ENCODE measurements at regions of chr11 and their contacts with region 1.

Region 1: GRCh38 chr11:73393479-73394380 is 17.5 kb downstream of the RELT start:
- DNase-seq: peak; percentile 45 to 81 (median 71)
- ATAC-seq: peak; percentile 79
- H3K4me3 ChIP-seq: no peak overlapping the region
- H3K4me3 Mint-ChIP-seq: no peak overlapping the region
- H3K27ac ChIP-seq: no peak overlapping the region
- H3K27ac Mint-ChIP-seq: no peak overlapping the region
- H3K4me1 ChIP-seq: no peaks in the 10 kb centered on the region
- H3K4me1 Mint-ChIP-seq: peaks cover 3% of the 10 kb centered on the region
- H3K27me3 ChIP-seq: no peaks in the 10 kb centered on the region
- H3K27me3 Mint-ChIP-seq: no peaks in the 10 kb centered on the region
- CTCF ChIP-seq: peak; percentile 62

Region 2: DNA sequence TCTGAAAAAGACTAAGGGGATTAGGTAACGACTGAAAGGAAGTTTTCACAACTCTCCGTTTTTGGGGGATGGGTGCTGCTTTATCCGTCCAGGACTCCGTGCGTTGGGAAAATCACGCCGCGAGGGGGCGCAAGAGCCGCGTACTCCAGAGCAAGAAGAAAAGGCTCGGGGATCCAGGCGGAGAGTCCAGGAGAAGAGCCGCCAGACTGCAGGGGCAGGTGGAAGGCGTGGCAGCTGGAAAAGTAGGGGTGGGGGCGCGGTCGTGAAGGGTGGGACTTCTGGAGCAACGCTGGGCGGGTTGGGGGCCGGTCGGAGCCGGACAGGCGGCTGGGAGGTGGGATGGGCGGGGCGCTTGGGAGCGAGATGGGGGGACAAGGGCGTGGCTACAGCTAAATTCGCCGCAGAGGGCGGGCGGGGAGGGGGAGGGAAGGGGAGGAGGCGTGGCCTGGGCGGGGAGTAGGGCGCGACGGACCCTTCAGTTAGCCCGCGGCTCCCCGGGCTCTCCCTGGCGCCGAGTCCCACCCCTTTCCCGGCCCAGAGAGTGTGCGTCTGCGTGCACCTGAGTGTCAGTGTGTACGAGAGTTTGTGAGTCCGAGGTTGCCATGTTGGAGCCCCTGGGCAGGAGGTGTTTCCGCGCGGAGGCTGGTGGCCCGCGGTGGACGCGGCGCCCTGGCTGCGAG is 86.3 kb before region 1 on chr11:
- CTCF ChIA-PET with region 1: interaction called, 5 read pairs
- POLR2A ChIA-PET with region 1: no interaction called
- intact Hi-C with region 1: loop called (anchors 1 kb)
- DNase-seq: peak; percentile 77 to 94 (median 89)
- ATAC-seq: peak; percentile 71
- H3K4me3 ChIP-seq: peak overlapping the region; percentile 62 to 77
- H3K4me3 Mint-ChIP-seq: peak overlapping the region; percentile 86
- H3K27ac ChIP-seq: no peak overlapping the region
- H3K27ac Mint-ChIP-seq: no peak overlapping the region
- H3K4me1 ChIP-seq: peaks cover 9% of the 10 kb centered on the region
- H3K4me1 Mint-ChIP-seq: peaks cover 10% of the 10 kb centered on the region
- H3K27me3 ChIP-seq: peaks cover 11 to 12% of the 10 kb centered on the region in 2 experiments
- H3K27me3 Mint-ChIP-seq: peaks cover 15% of the 10 kb centered on the region
- CTCF ChIP-seq: peak; percentile 46

Region 3: DNA sequence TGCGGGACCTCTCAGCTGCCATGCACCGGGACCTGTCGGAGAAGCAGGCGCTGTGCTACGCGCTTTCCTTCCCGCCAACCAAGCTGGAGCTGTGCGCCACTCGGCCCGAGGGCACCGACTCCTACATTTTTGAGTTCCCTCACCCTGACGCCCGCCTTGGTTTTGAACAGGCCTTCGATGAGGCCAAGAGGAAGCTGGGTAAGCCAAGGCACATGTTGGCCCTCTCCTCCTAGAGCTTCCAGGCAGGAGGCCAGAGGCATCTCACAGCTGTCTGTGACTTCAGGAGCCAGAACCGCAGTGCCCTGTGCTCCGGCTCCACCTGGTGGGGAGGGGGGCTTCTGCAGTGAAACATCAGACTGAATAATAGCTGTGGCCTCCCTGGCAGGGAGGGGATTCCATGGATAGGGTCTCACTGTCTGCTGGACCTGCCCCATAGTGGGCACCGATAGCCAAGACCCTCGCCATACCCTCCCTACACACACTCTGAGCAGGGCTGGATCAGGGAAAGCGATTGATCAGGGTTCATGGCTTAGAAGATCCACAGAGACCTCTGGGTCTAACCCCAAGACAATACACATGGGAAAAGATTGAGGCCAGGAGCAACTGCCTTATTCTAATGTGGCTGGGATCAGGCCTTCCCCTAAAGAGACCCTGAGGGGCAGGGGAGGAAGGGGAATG is 33.3 kb before region 1 on chr11:
- CTCF ChIA-PET with region 1: interaction called, 233 read pairs
- POLR2A ChIA-PET with region 1: no interaction called
- intact Hi-C with region 1: no loop called
- DNase-seq: peak in 6 of 9 experiments; percentile 10 to 46 (median 38)
- ATAC-seq: peak; percentile 73
- H3K4me3 ChIP-seq: no peak overlapping the region
- H3K4me3 Mint-ChIP-seq: no peak overlapping the region
- H3K27ac ChIP-seq: no peak overlapping the region
- H3K27ac Mint-ChIP-seq: no peak overlapping the region
- H3K4me1 ChIP-seq: peaks cover 2% of the 10 kb centered on the region
- H3K4me1 Mint-ChIP-seq: peaks cover 9% of the 10 kb centered on the region
- H3K27me3 ChIP-seq: no peaks in the 10 kb centered on the region
- H3K27me3 Mint-ChIP-seq: no peaks in the 10 kb centered on the region
- CTCF ChIP-seq: peak; percentile 44

Region 4: GRCh38 chr11:73366265-73366610 is 27.5 kb before region 1 on chr11:
- CTCF ChIA-PET with region 1: interaction called, 12 read pairs
- POLR2A ChIA-PET with region 1: no interaction called
- intact Hi-C with region 1: no loop called
- DNase-seq: peak in 6 of 9 experiments; percentile 23 to 81 (median 58)
- ATAC-seq: peak; percentile 92
- H3K4me3 ChIP-seq: peak overlapping the region; percentile 18 to 27
- H3K4me3 Mint-ChIP-seq: peak overlapping the region; percentile 68
- H3K27ac ChIP-seq: peak overlapping the region; percentile 65 to 86
- H3K27ac Mint-ChIP-seq: peak overlapping the region; percentile 94
- H3K4me1 ChIP-seq: peaks cover 29% of the 10 kb centered on the region
- H3K4me1 Mint-ChIP-seq: peaks cover 35% of the 10 kb centered on the region
- H3K27me3 ChIP-seq: no peaks in the 10 kb centered on the region
- H3K27me3 Mint-ChIP-seq: no peaks in the 10 kb centered on the region
- CTCF ChIP-seq: no peak

Region 5: DNA sequence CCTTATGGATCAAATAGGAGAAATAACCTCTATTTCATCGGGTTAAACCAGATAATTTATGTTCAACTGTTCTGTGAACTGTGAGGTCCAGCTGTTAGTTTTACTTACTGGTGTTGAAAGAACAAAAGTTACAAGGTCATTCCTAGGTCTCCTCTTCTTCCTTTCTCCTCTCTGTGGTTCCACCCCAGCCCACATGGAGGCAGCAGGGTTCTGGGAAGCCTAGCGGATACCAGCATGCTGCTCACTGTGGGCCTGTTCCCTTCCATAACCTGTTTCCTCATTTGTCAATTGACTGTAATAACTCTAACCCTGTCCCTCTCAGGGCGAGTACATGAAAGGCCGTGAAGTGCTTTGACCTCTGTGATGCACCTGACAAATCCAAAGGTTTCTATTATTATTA is 10.3 kb after region 1 on chr11:
- CTCF ChIA-PET with region 1: interaction called, 16 read pairs
- POLR2A ChIA-PET with region 1: no interaction called
- intact Hi-C with region 1: no loop called
- DNase-seq: peak in 1 of 9 experiments; percentile 22
- ATAC-seq: no peak
- H3K4me3 ChIP-seq: no peak overlapping the region
- H3K4me3 Mint-ChIP-seq: no peak overlapping the region
- H3K27ac ChIP-seq: no peak overlapping the region
- H3K27ac Mint-ChIP-seq: no peak overlapping the region
- H3K4me1 ChIP-seq: no peaks in the 10 kb centered on the region
- H3K4me1 Mint-ChIP-seq: no peaks in the 10 kb centered on the region
- H3K27me3 ChIP-seq: no peaks in the 10 kb centered on the region
- H3K27me3 Mint-ChIP-seq: no peaks in the 10 kb centered on the region
- CTCF ChIP-seq: no peak

Region 6: DNA sequence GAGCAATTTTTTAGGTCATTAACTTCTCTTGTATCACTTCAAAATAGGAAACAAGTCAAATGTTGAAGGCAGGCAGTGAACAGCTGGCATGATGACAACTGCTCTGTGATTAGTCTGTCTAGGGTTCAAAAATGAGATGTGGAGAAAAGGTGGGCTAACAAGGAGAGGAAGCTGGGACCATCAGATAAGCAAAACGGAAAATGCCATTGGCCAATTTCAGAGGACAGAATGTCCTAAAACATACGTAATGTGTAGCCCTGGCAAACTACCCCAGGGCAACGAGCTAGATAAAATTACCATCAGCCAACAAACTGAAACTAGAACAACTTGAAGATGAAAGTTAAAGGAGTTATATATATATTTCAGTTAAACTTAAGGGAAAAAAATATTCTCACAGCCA is 75.7 kb after region 1 on chr11:
- CTCF ChIA-PET with region 1: no interaction called
- POLR2A ChIA-PET with region 1: no interaction called
- intact Hi-C with region 1: no loop called
- DNase-seq: no peak
- ATAC-seq: no peak
- H3K4me3 ChIP-seq: no peak overlapping the region
- H3K4me3 Mint-ChIP-seq: no peak overlapping the region
- H3K27ac ChIP-seq: no peak overlapping the region
- H3K27ac Mint-ChIP-seq: no peak overlapping the region
- H3K4me1 ChIP-seq: no peaks in the 10 kb centered on the region
- H3K4me1 Mint-ChIP-seq: no peaks in the 10 kb centered on the region
- H3K27me3 ChIP-seq: no peaks in the 10 kb centered on the region
- H3K27me3 Mint-ChIP-seq: no peaks in the 10 kb centered on the region
- CTCF ChIP-seq: no peak